Left cardiac atrium (tissue), 4 donors: ENCODE measurements at regions of chr9 and their contacts with region 1.

Region 1: DNA sequence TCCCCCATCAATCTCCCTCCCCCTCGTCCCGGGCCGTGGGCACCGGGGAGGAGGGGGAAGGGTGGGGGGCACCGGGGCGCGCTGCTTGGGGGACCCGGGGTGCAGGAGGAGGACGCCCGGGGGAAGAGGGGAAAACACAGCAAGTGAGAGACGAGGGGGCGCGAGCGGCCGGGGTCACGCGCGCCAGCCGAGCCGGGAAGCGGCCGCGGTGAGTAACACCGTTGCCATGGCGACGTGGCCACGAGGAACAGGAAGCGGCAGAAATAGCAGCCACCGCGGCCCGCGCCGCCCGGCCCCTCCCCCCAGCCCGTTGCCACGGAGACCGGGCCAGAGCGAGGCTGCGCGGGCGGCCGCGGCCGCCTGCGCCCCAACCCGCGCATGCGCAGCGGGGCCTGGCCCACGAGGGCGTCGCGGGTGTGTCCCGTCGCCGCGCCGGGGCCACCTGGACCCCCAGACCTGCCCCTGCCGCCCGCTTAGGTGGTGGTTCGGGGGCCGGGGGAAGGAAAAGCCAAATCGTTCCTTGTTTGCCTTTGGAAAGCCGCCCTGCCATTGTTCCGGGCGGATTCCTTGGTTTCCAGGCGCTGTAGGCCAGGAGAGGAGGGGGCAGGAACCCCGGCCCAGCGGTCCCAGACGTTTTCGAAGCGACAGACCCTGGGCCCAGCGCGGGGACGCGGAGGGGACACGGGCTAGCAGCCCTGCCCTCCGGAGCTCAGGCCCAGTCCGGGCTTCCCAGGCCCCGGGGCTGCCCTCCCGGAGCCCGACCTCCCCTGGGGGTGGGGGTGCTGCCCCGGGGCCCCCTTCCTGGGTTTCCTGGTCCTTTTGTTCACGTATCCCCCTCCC is 207.1 kb downstream of the C9orf50 start:
- DNase-seq: peak; percentile 100
- ATAC-seq: peak; percentile 92 to 93

Region 2: GRCh38 chr9:129333953-129334724 is 79.6 kb before region 1 on chr9:
- intact Hi-C with region 1: loop called in 1 of 2 experiments (anchors 5 kb)
- DNase-seq: peak; percentile 94
- ATAC-seq: peak; percentile 90 to 91

Region 3: GRCh38 chr9:129458663-129459555 is 45.2 kb after region 1 on chr9:
- intact Hi-C with region 1: loop called in 1 of 2 experiments (anchors 5 kb)
- DNase-seq: peak; percentile 63
- ATAC-seq: peak; percentile 18 to 51

Region 4: GRCh38 chr9:129487642-129488409 is 74.1 kb after region 1 on chr9:
- intact Hi-C with region 1: loop called in 1 of 2 experiments (anchors 5 kb)
- DNase-seq: peak; percentile 77
- ATAC-seq: peak; percentile 4

Region 5: DNA sequence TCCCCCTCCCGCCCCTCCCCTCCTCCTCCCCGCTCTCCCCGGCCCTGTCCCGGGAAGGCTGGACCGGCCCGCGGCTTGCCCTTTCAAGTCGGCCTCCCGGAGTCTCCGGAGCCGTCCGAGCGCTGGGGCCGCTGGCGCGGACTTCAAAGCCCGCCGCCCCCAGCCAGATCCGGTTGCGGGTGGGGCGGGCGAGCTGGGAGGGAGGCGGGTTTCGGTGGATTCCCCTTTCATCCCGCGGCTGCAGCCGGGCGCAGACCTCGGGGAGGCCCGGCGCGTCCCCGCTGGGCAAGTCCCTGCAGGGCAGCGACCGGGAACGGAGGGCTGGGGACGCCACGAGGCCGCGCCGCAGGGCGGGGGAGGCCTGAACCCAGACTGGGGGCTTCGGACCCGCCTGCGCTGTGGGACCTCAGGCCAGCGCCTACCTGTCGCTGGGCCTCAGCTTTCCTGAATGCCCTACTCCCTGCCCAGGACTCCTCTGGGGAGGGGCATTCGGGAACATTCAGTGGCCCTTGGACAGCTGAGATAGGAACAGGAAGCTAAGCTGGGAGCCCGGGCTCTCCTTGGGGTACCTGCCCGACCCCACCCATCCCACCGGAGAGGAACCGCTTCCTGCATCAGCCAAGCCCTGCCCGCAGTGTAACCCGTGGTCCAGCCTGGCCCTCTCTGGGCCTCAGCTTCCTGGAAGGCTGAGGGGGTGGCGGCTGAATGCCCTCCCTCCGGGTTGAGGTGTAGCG is 183.8 kb after region 1 on chr9:
- intact Hi-C with region 1: no loop called
- DNase-seq: peak; percentile 78
- ATAC-seq: peak; percentile 42 to 76